ENCODE measurements at regions of chr2 and their contacts with region 1.

Region 1: DNA sequence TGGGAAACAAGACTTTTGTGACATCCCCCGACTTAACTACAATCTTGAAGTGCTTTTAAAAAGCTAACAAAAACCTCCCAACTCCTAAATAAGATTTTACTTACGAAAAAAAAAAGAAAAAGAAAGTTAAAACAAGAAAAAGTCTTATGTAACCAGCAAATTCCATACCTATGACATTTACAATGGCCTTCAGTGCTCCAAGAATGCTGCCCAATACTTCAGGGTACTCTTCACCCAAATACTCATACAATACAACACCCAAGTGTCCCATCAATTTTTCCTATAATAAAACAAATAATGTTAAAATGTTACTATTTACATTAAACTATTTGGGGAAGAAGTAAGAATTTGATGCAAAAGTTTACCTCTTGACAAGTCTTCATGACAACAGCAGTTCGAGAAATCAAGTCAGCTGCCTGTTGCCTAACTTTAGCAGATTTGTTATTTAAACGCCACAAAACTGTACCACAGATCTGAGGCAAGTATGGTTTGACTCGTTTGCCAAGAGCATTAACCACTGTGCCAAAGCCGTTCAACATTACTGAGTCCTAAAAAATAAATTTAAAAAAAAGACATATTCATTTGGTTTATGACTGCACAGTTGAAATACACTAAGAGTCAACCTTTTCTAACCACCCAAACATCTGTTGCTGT is 34.8 kb downstream of the SF3B1 start:
- DNase-seq: no peak
- H3K4me3 ChIP-seq: no peak overlapping the region
- H3K27ac ChIP-seq: no peak overlapping the region
- H3K4me1 ChIP-seq: no peaks in the 10 kb centered on the region
- H3K27me3 ChIP-seq: no peaks in the 10 kb centered on the region
- CTCF ChIP-seq: no peak
- EP300 ChIP-seq: no peak
- POLR2A ChIP-seq: no peak

Region 2: GRCh38 chr2:196783431-196784094 is 616.5 kb before region 1 on chr2:
- in situ Hi-C with region 1: loop called in 2 of 4 experiments (anchors 25 kb)
- intact Hi-C with region 1: loop called (anchors 10 kb)
- DNase-seq: no peak
- H3K4me3 ChIP-seq: no peak overlapping the region
- H3K27ac ChIP-seq: no peak overlapping the region
- H3K4me1 ChIP-seq: no peaks in the 10 kb centered on the region
- H3K27me3 ChIP-seq: no peaks in the 10 kb centered on the region
- CTCF ChIP-seq: no peak
- EP300 ChIP-seq: no peak
- POLR2A ChIP-seq: no peak

Region 3: GRCh38 chr2:196798980-196799379 is 601.0 kb before region 1 on chr2:
- in situ Hi-C with region 1: loop called in 2 of 4 experiments (anchors 25 kb)
- intact Hi-C with region 1: no loop called
- DNase-seq: no peak
- H3K4me3 ChIP-seq: peak overlapping the region; percentile 59 to 91 (median 80)
- H3K27ac ChIP-seq: peak overlapping the region; percentile 73 to 86 (median 82)
- H3K4me1 ChIP-seq: peaks cover 6 to 36% (median 15%) of the 10 kb centered on the region in 4 donors
- H3K27me3 ChIP-seq: no peaks in the 10 kb centered on the region
- CTCF ChIP-seq: no peak
- EP300 ChIP-seq: no peak
- POLR2A ChIP-seq: no peak

Region 4: DNA sequence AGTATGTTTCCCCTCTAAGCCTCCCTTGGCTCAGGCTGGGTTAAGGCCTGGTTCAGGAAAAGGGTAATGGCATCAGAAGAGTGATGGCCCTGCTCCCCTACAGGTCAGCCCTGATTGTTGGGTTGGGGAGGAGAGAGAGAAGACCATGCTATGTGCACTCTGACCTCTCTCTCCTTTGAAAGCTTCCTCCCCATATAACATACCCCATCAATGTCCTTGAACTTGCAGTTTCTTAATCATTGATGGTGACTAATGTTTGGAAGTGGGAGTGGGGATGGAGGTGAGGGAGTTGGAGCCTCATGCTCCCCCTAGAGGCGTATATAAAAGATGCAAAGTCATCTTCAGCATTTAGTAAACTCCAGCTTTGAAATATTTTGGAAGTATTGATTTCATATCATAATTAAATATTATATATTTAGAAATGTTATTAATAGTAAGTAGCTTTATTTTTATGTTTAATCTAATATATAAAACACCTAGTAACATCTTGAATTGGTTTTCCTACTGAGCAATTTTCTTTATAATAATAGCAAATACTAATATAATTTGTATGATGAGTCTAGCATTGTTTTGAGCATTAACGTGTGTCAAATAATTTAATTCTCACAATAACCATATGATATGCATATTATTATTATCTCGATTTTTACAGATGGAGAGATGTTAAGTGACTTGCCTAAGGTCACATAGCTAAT is 413.2 kb after region 1 on chr2:
- in situ Hi-C with region 1: no loop called
- intact Hi-C with region 1: no loop called
- DNase-seq: no peak
- H3K4me3 ChIP-seq: no peak overlapping the region
- H3K27ac ChIP-seq: no peak overlapping the region
- H3K4me1 ChIP-seq: no peaks in the 10 kb centered on the region
- H3K27me3 ChIP-seq: peaks cover 7% of the 10 kb centered on the region
- CTCF ChIP-seq: peak; percentile 21 to 55 (median 47)
- EP300 ChIP-seq: no peak
- POLR2A ChIP-seq: no peak

Measured in transverse colon (tissue), 4 donors.